ENCODE measurements at regions of chr11 and their contacts with region 1.

Region 1: GRCh38 chr11:83063073-83063754 is 8.5 kb downstream of the RAB30 start:
- DNase-seq: peak; percentile 91
- ATAC-seq: peak; percentile 68
- H3K4me3 ChIP-seq: peak overlapping the region; percentile 35 to 62 (median 51)
- H3K4me3 Mint-ChIP-seq: peak overlapping the region; percentile 89
- H3K27ac ChIP-seq: peak overlapping the region; percentile 86 to 94
- H3K27ac Mint-ChIP-seq: peak overlapping the region; percentile 98
- H3K4me1 ChIP-seq: peaks cover 92 to 95% of the 10 kb centered on the region in 2 donors
- H3K4me1 Mint-ChIP-seq: peaks cover 85% of the 10 kb centered on the region
- H3K27me3 ChIP-seq: no peaks in the 10 kb centered on the region
- H3K27me3 Mint-ChIP-seq: no peaks in the 10 kb centered on the region
- CTCF ChIP-seq: no peak

Region 2: DNA sequence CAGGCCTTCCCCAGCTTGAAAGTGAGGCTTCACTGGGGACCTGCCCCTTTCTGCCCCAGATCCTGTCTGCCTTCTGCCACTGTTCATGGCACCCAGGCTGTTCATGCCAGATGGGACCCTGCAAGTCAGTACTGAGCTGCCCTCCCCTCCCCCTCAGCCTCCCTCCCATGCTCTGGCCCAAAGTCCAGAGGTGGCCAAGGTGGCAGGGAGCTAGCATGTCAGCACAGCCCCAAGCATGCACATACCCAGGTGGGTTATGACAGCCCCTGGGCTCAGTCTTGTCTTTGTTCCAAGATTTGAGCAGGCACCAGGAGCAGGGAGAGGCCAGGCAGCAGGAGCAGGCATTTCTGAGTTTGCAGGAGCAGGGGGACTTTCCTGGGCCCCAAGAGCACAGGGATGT is 117.5 kb before region 1 on chr11:
- CTCF ChIA-PET with region 1: no interaction called
- POLR2A ChIA-PET with region 1: no interaction called
- intact Hi-C with region 1: no loop called
- DNase-seq: no peak
- ATAC-seq: no peak
- H3K4me3 ChIP-seq: no peak overlapping the region
- H3K4me3 Mint-ChIP-seq: no peak overlapping the region
- H3K27ac ChIP-seq: no peak overlapping the region
- H3K27ac Mint-ChIP-seq: no peak overlapping the region
- H3K4me1 ChIP-seq: no peaks in the 10 kb centered on the region
- H3K4me1 Mint-ChIP-seq: peaks cover 2% of the 10 kb centered on the region
- H3K27me3 ChIP-seq: no peaks in the 10 kb centered on the region
- H3K27me3 Mint-ChIP-seq: no peaks in the 10 kb centered on the region
- CTCF ChIP-seq: no peak

Region 3: DNA sequence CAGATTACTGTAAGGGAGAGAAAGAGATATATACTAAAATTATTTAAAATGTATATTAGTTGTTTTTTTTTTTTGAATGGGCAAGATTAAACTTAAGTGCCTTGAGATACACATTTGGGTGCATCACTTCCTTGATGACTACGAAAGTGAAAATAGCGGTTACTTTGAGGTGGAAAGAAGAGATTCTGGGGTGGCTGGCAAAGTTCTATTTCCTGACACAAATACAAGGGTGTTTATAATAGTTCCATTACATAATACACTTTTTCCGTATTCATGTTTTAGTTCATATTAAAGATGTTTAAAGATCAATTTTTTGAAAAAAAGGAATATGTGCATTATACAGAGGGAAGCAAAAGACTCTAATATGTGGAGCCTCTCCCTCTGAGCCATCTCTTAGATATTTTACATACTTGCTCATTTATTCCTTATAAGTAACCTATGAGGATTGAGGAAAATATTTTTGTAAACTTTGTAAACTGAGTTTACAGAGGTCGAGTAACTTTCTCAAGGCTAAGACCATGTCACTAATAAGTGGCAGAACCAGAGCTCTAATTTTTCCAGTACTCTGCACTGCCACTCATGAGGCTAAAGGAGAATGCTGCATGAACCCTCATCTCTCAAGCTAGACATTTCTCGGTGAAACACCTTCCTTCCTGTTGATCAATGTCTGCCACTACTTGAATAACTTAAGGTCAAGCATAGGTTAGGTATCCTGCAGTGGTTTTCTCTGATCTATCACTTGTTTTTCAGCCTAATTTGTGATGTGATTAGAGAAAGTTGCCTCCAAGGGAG is 103.0 kb before region 1 on chr11:
- CTCF ChIA-PET with region 1: interaction called, 3 read pairs
- POLR2A ChIA-PET with region 1: no interaction called
- intact Hi-C with region 1: loop called (anchors 2 kb)
- DNase-seq: peak; percentile 56
- ATAC-seq: peak; percentile 77
- H3K4me3 ChIP-seq: peak overlapping the region in 2 of 5 experiments; percentile 3 to 43
- H3K4me3 Mint-ChIP-seq: peak overlapping the region; percentile 67
- H3K27ac ChIP-seq: peak overlapping the region; percentile 70 to 79
- H3K27ac Mint-ChIP-seq: peak overlapping the region; percentile 92
- H3K4me1 ChIP-seq: peaks cover 47 to 48% of the 10 kb centered on the region in 2 donors
- H3K4me1 Mint-ChIP-seq: peaks cover 59% of the 10 kb centered on the region
- H3K27me3 ChIP-seq: no peaks in the 10 kb centered on the region
- H3K27me3 Mint-ChIP-seq: no peaks in the 10 kb centered on the region
- CTCF ChIP-seq: no peak

Region 4: DNA sequence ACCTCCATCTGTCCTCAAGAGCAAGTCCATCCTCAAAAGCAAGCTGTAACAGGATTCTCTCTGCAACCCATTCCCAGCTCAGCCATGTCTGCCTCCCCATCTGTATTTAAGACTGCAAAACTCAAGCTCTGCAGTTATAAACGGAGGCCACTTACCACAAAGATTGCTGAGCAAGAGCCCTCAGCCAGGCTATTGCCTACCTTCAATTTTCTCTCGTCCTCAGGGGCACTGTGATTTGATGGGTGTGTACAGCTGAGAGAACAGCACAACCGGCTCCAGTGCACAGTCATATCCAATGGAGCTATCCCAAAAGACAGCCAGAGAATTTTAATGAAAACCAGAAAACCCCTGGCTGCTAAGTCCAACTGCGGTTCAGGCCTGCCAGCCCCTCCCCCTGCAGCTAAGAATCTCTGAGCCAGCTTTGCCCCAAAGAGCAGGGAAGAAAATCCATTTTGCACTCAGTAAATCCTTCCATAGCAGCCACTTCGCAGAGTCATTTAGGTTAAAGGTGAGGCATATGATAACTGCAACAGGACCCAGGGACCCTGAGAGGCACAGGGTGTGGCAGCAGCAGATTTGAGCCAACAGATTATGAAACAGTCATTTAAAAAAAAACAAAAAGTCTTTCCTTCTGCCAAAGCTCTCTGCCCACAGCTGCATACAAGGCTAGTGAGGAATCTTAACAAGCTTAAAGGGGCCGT is 29.1 kb before region 1 on chr11:
- CTCF ChIA-PET with region 1: interaction called, 8 read pairs
- POLR2A ChIA-PET with region 1: interaction called, 21 read pairs
- intact Hi-C with region 1: loop called (anchors 2 kb)
- DNase-seq: no peak
- ATAC-seq: no peak
- H3K4me3 ChIP-seq: peak overlapping the region in 1 of 5 experiments; percentile 14
- H3K4me3 Mint-ChIP-seq: peak overlapping the region; percentile 88
- H3K27ac ChIP-seq: peak overlapping the region in 1 of 2 donors; percentile 96
- H3K27ac Mint-ChIP-seq: peak overlapping the region; percentile 88
- H3K4me1 ChIP-seq: peaks cover 56% of the 10 kb centered on the region in 2 donors
- H3K4me1 Mint-ChIP-seq: peaks cover 71% of the 10 kb centered on the region
- H3K27me3 ChIP-seq: no peaks in the 10 kb centered on the region
- H3K27me3 Mint-ChIP-seq: no peaks in the 10 kb centered on the region
- CTCF ChIP-seq: no peak

Region 5: DNA sequence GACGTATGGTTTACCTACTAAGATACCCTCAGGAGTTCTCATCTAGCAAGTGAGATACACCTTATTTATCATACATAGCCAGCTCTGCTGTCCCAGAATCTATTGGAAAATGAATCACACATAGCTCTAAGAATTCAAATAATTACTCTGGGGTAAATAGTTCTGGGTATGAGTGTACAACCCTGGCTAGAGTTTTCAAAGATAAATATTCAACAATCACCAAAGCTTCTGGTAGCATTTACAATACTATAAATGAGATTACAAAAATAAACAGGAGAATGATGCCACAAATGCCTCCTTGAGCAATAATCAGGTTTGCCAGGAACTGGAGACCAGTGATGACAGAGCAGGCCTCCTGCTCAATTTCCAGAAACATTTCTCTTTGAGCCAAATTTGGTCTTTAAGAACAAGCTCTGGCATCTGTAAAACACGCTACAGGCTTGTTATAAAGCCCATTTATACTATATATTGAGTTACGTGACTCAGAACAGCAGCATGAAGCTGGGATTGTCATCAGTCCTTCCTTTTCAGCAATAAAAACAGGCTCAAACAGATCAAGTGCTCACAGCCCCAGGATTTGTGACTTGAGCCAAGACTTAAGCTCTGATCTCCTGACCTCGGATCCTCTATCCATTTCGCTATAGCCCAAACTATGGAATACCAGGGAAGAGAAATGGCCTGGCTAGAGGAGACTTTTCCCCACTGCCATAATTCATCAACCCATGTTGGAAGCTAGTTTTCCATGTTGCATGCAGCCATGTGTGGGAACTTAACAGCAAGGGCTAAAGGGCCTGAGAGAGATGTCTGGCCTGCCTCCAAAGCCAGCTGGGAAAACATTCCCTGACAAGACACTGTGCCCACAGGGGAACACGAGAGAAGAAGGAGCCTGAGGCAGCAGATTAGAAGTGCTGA is 11.2 kb before region 1 on chr11:
- CTCF ChIA-PET with region 1: interaction called, 17 read pairs
- POLR2A ChIA-PET with region 1: interaction called, 9 read pairs
- intact Hi-C with region 1: loop called (anchors 1 kb)
- DNase-seq: no peak
- ATAC-seq: no peak
- H3K4me3 ChIP-seq: no peak overlapping the region
- H3K4me3 Mint-ChIP-seq: no peak overlapping the region
- H3K27ac ChIP-seq: peak overlapping the region; percentile 74 to 94
- H3K27ac Mint-ChIP-seq: peak overlapping the region; percentile 82
- H3K4me1 ChIP-seq: peaks cover 72 to 83% of the 10 kb centered on the region in 2 donors
- H3K4me1 Mint-ChIP-seq: peaks cover 80% of the 10 kb centered on the region
- H3K27me3 ChIP-seq: no peaks in the 10 kb centered on the region
- H3K27me3 Mint-ChIP-seq: no peaks in the 10 kb centered on the region
- CTCF ChIP-seq: no peak

Region 6: GRCh38 chr11:84780689-84781293 is 1717.6 kb after region 1 on chr11:
- CTCF ChIA-PET with region 1: no interaction called
- POLR2A ChIA-PET with region 1: no interaction called
- intact Hi-C with region 1: no loop called
- DNase-seq: peak; percentile 32
- ATAC-seq: no peak
- H3K4me3 ChIP-seq: no peak overlapping the region
- H3K4me3 Mint-ChIP-seq: no peak overlapping the region
- H3K27ac ChIP-seq: no peak overlapping the region
- H3K27ac Mint-ChIP-seq: no peak overlapping the region
- H3K4me1 ChIP-seq: no peaks in the 10 kb centered on the region
- H3K4me1 Mint-ChIP-seq: no peaks in the 10 kb centered on the region
- H3K27me3 ChIP-seq: no peaks in the 10 kb centered on the region
- H3K27me3 Mint-ChIP-seq: no peaks in the 10 kb centered on the region
- CTCF ChIP-seq: peak; percentile 29

Measured in B cell (primary cell).